Activated T-helper 1 cell treated with anti-CD3 and anti-CD28 coated beads, Interleukin-12 subunit alpha, Interleukin-12 subunit beta, Interleukin-2, Interleukin-4 antibody, amounts not matched to agents 30 ng/mL and 10 ng/mL and 1 ng/mL, durations not matched to agents 14 hours and 24 hours and 36 hours (primary cell): ENCODE measurements at regions of chr4 and their contacts with region 1.

Region 1: GRCh38 chr4:15756361-15756861 is 21.7 kb upstream of the CD38 start:
- DNase-seq: peak; percentile 73
- H3K4me3 Mint-ChIP-seq: peak overlapping the region; percentile 76
- H3K27ac Mint-ChIP-seq: peak overlapping the region; percentile 94
- H3K4me1 Mint-ChIP-seq: peaks cover 54% of the 10 kb centered on the region
- H3K27me3 Mint-ChIP-seq: no peaks in the 10 kb centered on the region

Region 2: GRCh38 chr4:14787894-14788293 is 968.5 kb before region 1 on chr4:
- intact Hi-C with region 1: loop called (anchors 5 kb)
- DNase-seq: no peak
- H3K4me3 Mint-ChIP-seq: no peak overlapping the region
- H3K27ac Mint-ChIP-seq: no peak overlapping the region
- H3K4me1 Mint-ChIP-seq: peaks cover 49% of the 10 kb centered on the region
- H3K27me3 Mint-ChIP-seq: no peaks in the 10 kb centered on the region

Region 3: GRCh38 chr4:15375667-15376066 is 380.7 kb before region 1 on chr4:
- intact Hi-C with region 1: no loop called
- DNase-seq: no peak
- H3K4me3 Mint-ChIP-seq: no peak overlapping the region
- H3K27ac Mint-ChIP-seq: no peak overlapping the region
- H3K4me1 Mint-ChIP-seq: peaks cover 46% of the 10 kb centered on the region
- H3K27me3 Mint-ChIP-seq: peaks cover 2% of the 10 kb centered on the region

Region 4: GRCh38 chr4:15681207-15682015 is 75.0 kb before region 1 on chr4 and contains the start of gene FAM200B:
- intact Hi-C with region 1: loop called (anchors 1 kb)
- DNase-seq: peak; percentile 97
- H3K4me3 Mint-ChIP-seq: peak within 1 kb of the TSS; percentile 97
- H3K27ac Mint-ChIP-seq: peak within 1 kb of the TSS; percentile 94
- H3K4me1 Mint-ChIP-seq: peaks cover 45% of the 10 kb centered on the region
- H3K27me3 Mint-ChIP-seq: no peaks in the 10 kb centered on the region
- total RNA-seq, gene FAM200B: 5.5 and 6.6 TPM in 2 replicates

Region 5: GRCh38 chr4:15738877-15739276 is 17.5 kb before region 1 on chr4:
- intact Hi-C with region 1: loop called (anchors 1 kb)
- DNase-seq: no peak
- H3K4me3 Mint-ChIP-seq: peak overlapping the region; percentile 35
- H3K27ac Mint-ChIP-seq: peak overlapping the region; percentile 85
- H3K4me1 Mint-ChIP-seq: peaks cover 51% of the 10 kb centered on the region
- H3K27me3 Mint-ChIP-seq: no peaks in the 10 kb centered on the region

Region 6: GRCh38 chr4:15778289-15779241 is 22.2 kb after region 1 on chr4 and contains the start of gene CD38:
- intact Hi-C with region 1: loop called (anchors 1 kb)
- DNase-seq: peak; percentile 64
- H3K4me3 Mint-ChIP-seq: peak within 1 kb of the TSS; percentile 93
- H3K27ac Mint-ChIP-seq: peak within 1 kb of the TSS; percentile 92
- H3K4me1 Mint-ChIP-seq: peaks cover 86% of the 10 kb centered on the region
- H3K27me3 Mint-ChIP-seq: no peaks in the 10 kb centered on the region
- total RNA-seq, gene CD38: 148 and 152 TPM in 2 replicates

Region 7: GRCh38 chr4:16196478-16197393 is 440.3 kb after region 1 on chr4:
- intact Hi-C with region 1: no loop called
- DNase-seq: no peak
- H3K4me3 Mint-ChIP-seq: no peak overlapping the region
- H3K27ac Mint-ChIP-seq: no peak overlapping the region
- H3K4me1 Mint-ChIP-seq: peaks cover 20% of the 10 kb centered on the region
- H3K27me3 Mint-ChIP-seq: no peaks in the 10 kb centered on the region

Region 8: DNA sequence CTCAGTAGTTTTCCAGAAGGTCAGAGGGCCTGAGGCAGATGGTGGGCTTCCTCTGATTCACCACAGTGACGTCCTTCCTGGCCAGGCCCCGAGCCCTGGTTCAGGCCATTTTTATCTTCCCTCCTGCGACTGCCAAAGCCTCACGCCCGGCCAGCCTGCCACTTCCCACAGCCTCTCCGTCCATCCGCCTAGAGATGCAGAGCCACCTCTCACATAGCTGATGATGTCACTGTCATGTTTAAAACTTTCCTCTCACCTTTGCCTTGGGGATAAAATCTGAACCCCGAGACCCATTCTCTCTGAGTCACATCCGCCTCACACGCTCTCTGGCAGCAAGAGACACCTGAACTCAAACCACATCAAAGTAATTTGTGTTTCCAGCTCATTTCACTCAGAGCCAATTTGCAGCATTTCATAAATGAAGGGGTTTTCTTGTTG is 1580.1 kb after region 1 on chr4:
- intact Hi-C with region 1: loop called (anchors 5 kb)
- DNase-seq: peak; percentile 77
- H3K4me3 Mint-ChIP-seq: peak overlapping the region; percentile 47
- H3K27ac Mint-ChIP-seq: peak overlapping the region; percentile 87
- H3K4me1 Mint-ChIP-seq: peaks cover 43% of the 10 kb centered on the region
- H3K27me3 Mint-ChIP-seq: peaks cover 6% of the 10 kb centered on the region